Esophagus muscularis mucosa (tissue), 4 donors: ENCODE measurements at regions of chr1 and their contacts with region 1.

Region 1: GRCh38 chr1:109984456-109985275 is at the start of gene AHCYL1:
- DNase-seq: peak; percentile 100
- H3K4me3 ChIP-seq: peak within 1 kb of the TSS; percentile 75 to 95 (median 82)
- H3K27ac ChIP-seq: peak within 1 kb of the TSS; percentile 95 to 99 (median 97)
- H3K4me1 ChIP-seq: peaks cover 52 to 68% (median 58%) of the 10 kb centered on the region in 4 donors
- H3K27me3 ChIP-seq: no peaks in the 10 kb centered on the region
- CTCF ChIP-seq: peak; percentile 98 to 99 (median 99)
- EP300 ChIP-seq: peak; percentile 84
- POLR2A ChIP-seq: peak; percentile 98
- total RNA-seq, gene AHCYL1: 72.1 to 111 (median 91.0) TPM

Region 2: GRCh38 chr1:109548321-109549267 is 436.1 kb before region 1 on chr1 and contains the start of gene GNAI3:
- intact Hi-C with region 1: loop called (anchors 10 kb)
- DNase-seq: peak; percentile 98
- H3K4me3 ChIP-seq: peak within 1 kb of the TSS; percentile 86 to 96 (median 92)
- H3K27ac ChIP-seq: peak within 1 kb of the TSS; percentile 94 to 96 (median 96)
- H3K4me1 ChIP-seq: peaks cover 21 to 59% (median 56%) of the 10 kb centered on the region in 4 donors
- H3K27me3 ChIP-seq: no peaks in the 10 kb centered on the region
- CTCF ChIP-seq: peak in 2 of 3 experiments; percentile 1 to 8
- EP300 ChIP-seq: no peak
- POLR2A ChIP-seq: peak; percentile 90
- total RNA-seq, gene GNAI3: 5.9 to 7.2 (median 6.6) TPM

Region 3: DNA sequence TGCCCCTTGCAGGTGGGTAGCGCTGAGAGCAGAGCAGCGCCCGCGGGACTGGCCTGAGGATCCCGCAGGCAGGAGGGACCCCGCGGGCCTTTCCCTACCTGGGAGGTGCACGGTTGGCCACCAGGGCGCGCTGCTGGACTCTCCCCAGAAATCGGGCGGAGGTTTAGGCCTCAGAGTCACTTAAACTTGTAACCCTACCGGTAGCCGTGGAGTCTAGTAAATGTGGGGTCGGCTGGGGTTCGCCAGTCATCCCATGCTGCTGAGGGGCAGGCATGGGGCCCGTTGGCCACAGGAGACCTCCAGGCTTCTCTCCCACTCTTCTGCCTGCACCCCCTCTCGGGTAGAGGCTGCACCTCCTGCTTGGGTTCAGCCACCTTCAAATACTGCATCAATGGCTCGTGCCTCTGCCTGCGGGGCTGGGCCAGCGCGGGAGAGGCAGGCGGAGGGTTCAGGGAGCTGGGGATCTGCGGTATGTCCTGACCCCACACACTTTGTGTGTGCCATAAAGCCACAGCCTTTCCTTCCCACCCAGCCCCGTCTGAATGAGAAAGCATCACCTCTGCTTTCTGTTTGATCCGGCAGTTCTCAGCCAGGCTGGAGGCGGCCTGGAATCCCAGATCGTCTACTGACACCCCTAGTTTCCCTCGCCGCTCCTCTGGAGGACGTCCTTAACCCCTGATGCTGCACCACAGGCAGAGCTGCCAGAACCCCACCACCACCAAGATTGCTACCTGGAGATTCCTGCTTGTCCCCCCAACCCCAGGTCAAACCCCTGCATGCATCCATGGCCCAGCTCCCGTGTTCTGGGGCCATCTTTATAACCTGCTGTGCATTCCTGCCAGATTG is 341.1 kb before region 1 on chr1:
- intact Hi-C with region 1: loop called (anchors 5 kb)
- DNase-seq: peak; percentile 96
- H3K4me3 ChIP-seq: peak overlapping the region in 2 of 4 donors; percentile 20 to 30
- H3K27ac ChIP-seq: no peak overlapping the region
- H3K4me1 ChIP-seq: peaks cover 8 to 17% (median 10%) of the 10 kb centered on the region in 4 donors
- H3K27me3 ChIP-seq: no peaks in the 10 kb centered on the region
- CTCF ChIP-seq: peak; percentile 87 to 91 (median 87)
- EP300 ChIP-seq: no peak
- POLR2A ChIP-seq: no peak

Region 4: GRCh38 chr1:109773146-109773899 is 211.3 kb before region 1 on chr1:
- intact Hi-C with region 1: loop called (anchors 1 kb)
- DNase-seq: peak; percentile 94
- H3K4me3 ChIP-seq: no peak overlapping the region
- H3K27ac ChIP-seq: no peak overlapping the region
- H3K4me1 ChIP-seq: peaks cover 7 to 21% (median 16%) of the 10 kb centered on the region in 4 donors
- H3K27me3 ChIP-seq: no peaks in the 10 kb centered on the region
- CTCF ChIP-seq: peak; percentile 86 to 92 (median 89)
- EP300 ChIP-seq: no peak
- POLR2A ChIP-seq: no peak

Region 5: GRCh38 chr1:109927911-109928321 is 56.8 kb before region 1 on chr1:
- intact Hi-C with region 1: loop called (anchors 5 kb)
- DNase-seq: peak; percentile 95
- H3K4me3 ChIP-seq: no peak overlapping the region
- H3K27ac ChIP-seq: peak overlapping the region; percentile 76 to 85 (median 84)
- H3K4me1 ChIP-seq: peaks cover 51 to 72% (median 68%) of the 10 kb centered on the region in 4 donors
- H3K27me3 ChIP-seq: no peaks in the 10 kb centered on the region
- CTCF ChIP-seq: no peak
- EP300 ChIP-seq: peak; percentile 55
- POLR2A ChIP-seq: no peak